ENCODE measurements at regions of chr10 and their contacts with region 1.

Region 1: GRCh38 chr10:94178475-94179253 is 184.1 kb downstream of the NOC3L start:
- DNase-seq: no peak
- ATAC-seq: no peak
- H3K4me3 ChIP-seq: no peak overlapping the region
- H3K27ac ChIP-seq: no peak overlapping the region
- H3K4me1 ChIP-seq: no peaks in the 10 kb centered on the region
- H3K27me3 ChIP-seq: no peaks in the 10 kb centered on the region
- CTCF ChIP-seq: no peak

Region 2: DNA sequence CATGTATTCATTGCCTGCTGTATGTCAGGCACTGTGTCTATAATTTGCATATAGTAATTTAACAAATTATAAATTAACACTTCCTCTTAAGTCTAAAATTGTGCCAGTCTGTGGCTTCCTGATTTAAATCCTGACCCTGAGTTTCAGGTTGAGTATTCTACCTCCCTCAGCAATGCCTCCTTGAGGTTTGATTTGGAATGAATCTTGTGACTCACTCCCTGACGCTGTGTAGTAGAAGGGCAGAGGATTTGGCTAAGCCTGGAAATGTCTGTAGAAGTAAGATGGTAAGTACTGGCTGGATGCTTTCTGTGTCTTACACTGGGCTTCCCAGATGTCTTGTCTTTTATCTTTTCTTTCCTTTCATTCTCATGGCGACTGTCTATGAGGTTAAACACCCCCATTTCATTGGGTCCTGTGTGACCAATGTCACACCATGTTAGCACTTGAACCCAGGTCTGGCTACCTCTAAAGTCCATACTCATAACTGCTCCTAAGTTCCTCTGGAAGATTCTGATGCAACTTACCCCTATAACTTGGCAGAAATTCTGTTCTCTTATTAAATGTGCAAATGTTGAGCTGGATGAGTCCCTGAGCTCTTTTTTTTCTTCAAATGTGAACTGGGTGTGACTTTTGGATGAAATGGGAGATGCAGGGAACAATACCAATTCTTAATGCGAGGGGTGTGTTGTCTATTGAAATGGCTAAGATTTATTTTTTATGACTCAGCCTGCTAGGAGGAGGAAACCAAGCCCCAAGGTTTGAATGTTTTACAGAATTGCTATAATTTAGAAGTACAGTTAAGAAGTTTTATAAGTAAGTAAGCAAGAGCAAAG is 136.4 kb before region 1 on chr10:
- CTCF ChIA-PET with region 1: no interaction called
- POLR2A ChIA-PET with region 1: no interaction called
- in situ Hi-C with region 1: no loop called
- intact Hi-C with region 1: no loop called
- DNase-seq: no peak
- ATAC-seq: 0 out of 2 replicates have a peak, but pooled peaks have one; percentile 43
- H3K4me3 ChIP-seq: no peak overlapping the region
- H3K27ac ChIP-seq: no peak overlapping the region
- H3K4me1 ChIP-seq: peaks cover 19% of the 10 kb centered on the region
- H3K27me3 ChIP-seq: no peaks in the 10 kb centered on the region
- CTCF ChIP-seq: no peak; the same call in 1 of the 2 replicates

Region 3: GRCh38 chr10:94093286-94093905 is 85.3 kb before region 1 on chr10:
- CTCF ChIA-PET with region 1: interaction called, 10 read pairs
- POLR2A ChIA-PET with region 1: no interaction called
- in situ Hi-C with region 1: no loop called
- intact Hi-C with region 1: no loop called
- DNase-seq: no peak
- ATAC-seq: no peak
- H3K4me3 ChIP-seq: no peak overlapping the region
- H3K27ac ChIP-seq: no peak overlapping the region
- H3K4me1 ChIP-seq: peaks cover 38% of the 10 kb centered on the region
- H3K27me3 ChIP-seq: no peaks in the 10 kb centered on the region
- CTCF ChIP-seq: no peak

Region 4: GRCh38 chr10:94607111-94607510 is 428.4 kb after region 1 on chr10:
- CTCF ChIA-PET with region 1: no interaction called
- POLR2A ChIA-PET with region 1: no interaction called
- in situ Hi-C with region 1: no loop called
- intact Hi-C with region 1: no loop called
- DNase-seq: no peak
- ATAC-seq: no peak
- H3K4me3 ChIP-seq: no peak overlapping the region
- H3K27ac ChIP-seq: no peak overlapping the region
- H3K4me1 ChIP-seq: no peaks in the 10 kb centered on the region
- H3K27me3 ChIP-seq: no peaks in the 10 kb centered on the region
- CTCF ChIP-seq: no peak